Caco-2 (cell line): ENCODE measurements at regions of chr1 and their contacts with region 1.

Region 1: GRCh38 chr1:59699227-59699847 is 115.4 kb upstream of the HOOK1 start:
- DNase-seq: peak in 1 of 2 experiments; percentile 11
- H3K4me3 ChIP-seq: no peak overlapping the region
- H3K4me3 Mint-ChIP-seq: no peak overlapping the region
- H3K27ac Mint-ChIP-seq: no peak overlapping the region
- H3K4me1 ChIP-seq: no peaks in the 10 kb centered on the region
- H3K4me1 Mint-ChIP-seq: peaks cover 6% of the 10 kb centered on the region
- H3K27me3 ChIP-seq: no peaks in the 10 kb centered on the region
- H3K27me3 Mint-ChIP-seq: no peaks in the 10 kb centered on the region
- CTCF ChIP-seq: peak; percentile 59 to 72

Region 2: DNA sequence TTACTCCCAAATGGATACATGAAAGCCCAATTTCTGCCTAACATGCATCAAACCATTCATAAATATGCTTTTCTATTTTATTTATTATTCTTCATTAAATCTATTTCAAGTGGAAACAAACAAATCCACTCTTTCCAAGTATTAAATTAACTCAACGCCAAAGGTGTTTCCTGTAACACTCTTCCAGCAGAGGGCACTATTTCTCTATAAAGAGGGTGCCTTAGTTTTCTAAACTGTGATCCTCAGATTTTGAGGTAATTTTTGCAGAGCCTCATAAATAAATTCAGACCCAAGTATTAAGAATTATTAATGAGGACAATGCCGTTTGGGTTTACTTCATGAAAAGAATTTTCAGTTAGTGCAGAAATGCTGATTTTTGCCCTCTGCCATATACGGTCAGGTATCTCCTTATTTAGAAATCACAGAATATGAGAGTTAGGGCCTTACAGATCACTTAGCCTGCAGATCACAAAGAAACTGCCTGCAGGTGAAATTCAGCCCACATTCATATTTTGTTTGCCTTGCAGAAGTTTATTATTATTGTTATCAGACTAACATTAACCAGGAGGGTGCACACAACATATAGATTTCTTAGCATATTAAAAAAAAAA is 959.4 kb before region 1 on chr1:
- CTCF ChIA-PET with region 1: no interaction called
- POLR2A ChIA-PET with region 1: no interaction called
- intact Hi-C with region 1: loop called (anchors 1 kb)
- DNase-seq: peak in 1 of 2 experiments; percentile 57
- H3K4me3 ChIP-seq: no peak overlapping the region
- H3K4me3 Mint-ChIP-seq: no peak overlapping the region
- H3K27ac Mint-ChIP-seq: no peak overlapping the region
- H3K4me1 ChIP-seq: no peaks in the 10 kb centered on the region
- H3K4me1 Mint-ChIP-seq: no peaks in the 10 kb centered on the region
- H3K27me3 ChIP-seq: no peaks in the 10 kb centered on the region
- H3K27me3 Mint-ChIP-seq: no peaks in the 10 kb centered on the region
- CTCF ChIP-seq: peak; percentile 65

Region 3: GRCh38 chr1:59296358-59297256 is 402.7 kb before region 1 on chr1 and contains the start of gene FGGY:
- CTCF ChIA-PET with region 1: no interaction called
- POLR2A ChIA-PET with region 1: no interaction called
- intact Hi-C with region 1: loop called (anchors 5 kb)
- DNase-seq: peak; percentile 89 to 94
- H3K4me3 ChIP-seq: peak within 1 kb of the TSS; percentile 39
- H3K4me3 Mint-ChIP-seq: peak within 1 kb of the TSS; percentile 83
- H3K27ac Mint-ChIP-seq: peak within 1 kb of the TSS; percentile 79
- H3K4me1 ChIP-seq: no peaks in the 10 kb centered on the region
- H3K4me1 Mint-ChIP-seq: peaks cover 15% of the 10 kb centered on the region
- H3K27me3 ChIP-seq: no peaks in the 10 kb centered on the region
- H3K27me3 Mint-ChIP-seq: no peaks in the 10 kb centered on the region
- CTCF ChIP-seq: no peak
- total RNA-seq, gene FGGY: 3.4 and 6.4 TPM in 2 replicates

Region 4: DNA sequence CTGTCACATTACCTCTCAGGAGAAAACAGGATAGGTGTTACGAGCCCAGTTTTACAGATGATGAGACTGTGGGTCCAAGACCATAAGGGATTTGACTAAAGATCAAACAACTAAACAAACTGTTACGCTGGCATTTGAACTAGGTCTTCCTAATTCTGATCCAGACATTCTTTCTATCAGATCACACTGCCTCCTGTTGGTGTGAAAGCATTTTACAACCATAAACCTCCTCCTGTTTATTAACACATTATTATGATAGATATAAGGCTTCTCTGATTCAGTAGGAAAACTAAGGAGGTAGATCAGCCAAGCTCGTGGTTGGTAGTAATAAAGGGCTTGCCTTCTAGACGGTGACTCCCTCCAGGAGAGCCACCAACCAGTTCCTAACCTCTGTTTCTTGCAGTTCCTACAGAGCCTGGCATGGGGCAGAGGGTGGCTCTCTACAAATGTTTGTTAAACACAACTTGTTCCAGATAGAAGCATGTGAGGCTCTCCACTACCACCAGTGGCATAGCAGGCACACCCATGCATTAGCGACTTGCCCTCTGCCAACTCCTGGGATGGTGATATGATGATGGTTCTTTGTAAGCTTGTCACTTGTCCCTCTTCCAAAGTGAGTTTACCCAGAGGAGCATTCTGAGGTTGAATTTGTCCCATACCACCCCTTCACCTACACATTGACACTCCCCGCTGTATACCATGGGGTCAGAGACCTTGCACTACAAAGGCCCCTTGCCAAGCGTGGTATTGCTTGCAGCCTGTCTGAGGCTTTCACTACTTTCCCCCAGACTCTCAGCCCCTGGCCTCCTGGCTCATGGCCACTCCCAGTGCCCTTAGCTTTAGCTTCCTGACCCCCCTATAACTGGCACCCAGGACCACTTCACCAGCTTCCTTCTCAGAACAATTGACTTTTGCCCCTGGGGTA is 19.0 kb after region 1 on chr1:
- CTCF ChIA-PET with region 1: no interaction called
- POLR2A ChIA-PET with region 1: no interaction called
- intact Hi-C with region 1: no loop called
- DNase-seq: no peak
- H3K4me3 ChIP-seq: no peak overlapping the region
- H3K4me3 Mint-ChIP-seq: no peak overlapping the region
- H3K27ac Mint-ChIP-seq: no peak overlapping the region
- H3K4me1 ChIP-seq: no peaks in the 10 kb centered on the region
- H3K4me1 Mint-ChIP-seq: no peaks in the 10 kb centered on the region
- H3K27me3 ChIP-seq: no peaks in the 10 kb centered on the region
- H3K27me3 Mint-ChIP-seq: no peaks in the 10 kb centered on the region
- CTCF ChIP-seq: no peak

Region 5: DNA sequence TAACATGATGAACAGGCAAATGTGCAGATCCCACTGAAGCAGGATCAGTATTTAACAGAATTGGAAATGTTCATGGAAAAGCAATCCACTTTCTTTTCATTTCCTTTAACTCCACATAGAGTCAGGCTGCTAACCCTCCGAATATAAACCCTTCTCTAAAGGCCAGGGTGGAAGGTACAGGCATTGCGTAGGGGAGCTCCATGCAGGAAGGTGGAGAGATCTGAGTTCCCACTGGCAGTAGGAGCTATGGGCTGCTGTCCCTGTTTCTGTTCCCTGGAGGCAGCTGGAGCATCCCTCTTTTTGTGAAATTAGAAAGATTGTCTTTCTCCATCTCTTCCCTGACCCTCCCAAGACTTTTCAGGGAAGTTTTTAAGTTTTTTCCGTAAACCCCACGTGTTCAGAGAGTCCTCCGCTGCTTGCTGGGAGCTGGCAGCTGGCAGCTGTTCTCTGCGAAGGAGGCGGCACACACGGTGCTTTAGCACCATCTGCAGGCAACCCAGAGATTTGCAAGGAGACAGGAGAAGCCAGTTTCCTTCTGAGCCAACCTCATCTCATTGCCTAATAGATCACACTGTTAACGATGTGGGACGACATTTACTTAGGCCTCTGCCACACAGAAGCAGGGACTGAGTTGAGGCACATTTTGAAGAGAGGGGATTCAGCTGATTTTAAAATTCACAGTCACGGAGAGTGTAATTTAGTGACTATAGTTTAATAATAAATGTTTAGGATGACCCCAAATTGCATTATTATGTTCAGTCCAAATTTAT is 60.0 kb after region 1 on chr1:
- CTCF ChIA-PET with region 1: interaction called, 4 read pairs
- POLR2A ChIA-PET with region 1: no interaction called
- intact Hi-C with region 1: loop called (anchors 2 kb)
- DNase-seq: peak; percentile 54 to 75
- H3K4me3 ChIP-seq: no peak overlapping the region
- H3K4me3 Mint-ChIP-seq: peak overlapping the region; percentile 58
- H3K27ac Mint-ChIP-seq: no peak overlapping the region
- H3K4me1 ChIP-seq: no peaks in the 10 kb centered on the region
- H3K4me1 Mint-ChIP-seq: no peaks in the 10 kb centered on the region
- H3K27me3 ChIP-seq: no peaks in the 10 kb centered on the region
- H3K27me3 Mint-ChIP-seq: no peaks in the 10 kb centered on the region
- CTCF ChIP-seq: peak; percentile 70 to 76

Region 6: GRCh38 chr1:59769736-59770095 is 70.4 kb after region 1 on chr1:
- CTCF ChIA-PET with region 1: no interaction called
- POLR2A ChIA-PET with region 1: no interaction called
- intact Hi-C with region 1: no loop called
- DNase-seq: no peak
- H3K4me3 ChIP-seq: no peak overlapping the region
- H3K4me3 Mint-ChIP-seq: no peak overlapping the region
- H3K27ac Mint-ChIP-seq: no peak overlapping the region
- H3K4me1 ChIP-seq: no peaks in the 10 kb centered on the region
- H3K4me1 Mint-ChIP-seq: no peaks in the 10 kb centered on the region
- H3K27me3 ChIP-seq: no peaks in the 10 kb centered on the region
- H3K27me3 Mint-ChIP-seq: peaks cover 3% of the 10 kb centered on the region
- CTCF ChIP-seq: no peak